ENCODE measurements at regions of chr1 and their contacts with region 1.

Region 1: DNA sequence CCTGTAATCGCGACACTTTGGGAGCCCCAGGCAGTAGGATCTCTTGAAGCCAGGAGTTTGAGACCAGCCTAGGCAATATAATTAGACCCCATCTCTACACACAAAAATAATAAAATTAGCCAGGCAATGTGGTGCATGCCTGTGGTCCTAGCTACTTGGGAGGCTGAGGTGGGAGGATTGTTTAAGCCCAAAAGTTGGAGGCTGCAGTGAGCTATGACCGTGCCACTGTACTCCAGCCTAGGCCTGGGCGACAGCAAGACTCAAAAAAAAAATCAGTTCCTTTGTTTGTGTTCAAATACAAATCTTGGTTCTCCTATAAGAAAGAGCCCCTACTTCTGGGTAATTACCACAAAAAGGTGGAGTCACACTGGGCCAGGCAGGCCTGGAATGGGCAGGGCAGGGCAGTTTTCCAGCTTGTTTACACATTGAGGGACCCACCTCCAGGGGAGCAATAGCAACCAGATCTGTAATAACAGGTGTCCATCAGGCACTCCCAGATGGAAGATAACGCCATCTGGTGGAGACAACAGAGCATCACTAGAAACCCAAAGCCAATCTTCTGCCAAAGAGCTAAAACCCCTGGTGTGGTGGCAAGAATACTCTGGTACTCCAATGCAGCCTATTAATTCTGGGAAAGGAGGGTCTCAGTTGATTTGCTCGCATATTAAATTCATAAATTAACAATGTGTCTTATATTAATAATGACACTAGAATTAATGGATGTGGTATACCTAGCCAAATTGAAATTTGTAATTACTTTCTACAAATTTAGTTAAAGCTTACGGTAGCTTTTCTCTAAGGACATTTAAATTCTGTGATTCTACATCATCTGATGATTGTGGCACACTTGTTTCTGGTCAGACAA is 13.2 kb downstream of the PPP1R15B start:
- DNase-seq: peak; percentile 55
- H3K4me3 Mint-ChIP-seq: no peak overlapping the region
- H3K27ac Mint-ChIP-seq: peak overlapping the region; percentile 31
- H3K4me1 Mint-ChIP-seq: peaks cover 7% of the 10 kb centered on the region
- H3K27me3 Mint-ChIP-seq: no peaks in the 10 kb centered on the region

Region 2: DNA sequence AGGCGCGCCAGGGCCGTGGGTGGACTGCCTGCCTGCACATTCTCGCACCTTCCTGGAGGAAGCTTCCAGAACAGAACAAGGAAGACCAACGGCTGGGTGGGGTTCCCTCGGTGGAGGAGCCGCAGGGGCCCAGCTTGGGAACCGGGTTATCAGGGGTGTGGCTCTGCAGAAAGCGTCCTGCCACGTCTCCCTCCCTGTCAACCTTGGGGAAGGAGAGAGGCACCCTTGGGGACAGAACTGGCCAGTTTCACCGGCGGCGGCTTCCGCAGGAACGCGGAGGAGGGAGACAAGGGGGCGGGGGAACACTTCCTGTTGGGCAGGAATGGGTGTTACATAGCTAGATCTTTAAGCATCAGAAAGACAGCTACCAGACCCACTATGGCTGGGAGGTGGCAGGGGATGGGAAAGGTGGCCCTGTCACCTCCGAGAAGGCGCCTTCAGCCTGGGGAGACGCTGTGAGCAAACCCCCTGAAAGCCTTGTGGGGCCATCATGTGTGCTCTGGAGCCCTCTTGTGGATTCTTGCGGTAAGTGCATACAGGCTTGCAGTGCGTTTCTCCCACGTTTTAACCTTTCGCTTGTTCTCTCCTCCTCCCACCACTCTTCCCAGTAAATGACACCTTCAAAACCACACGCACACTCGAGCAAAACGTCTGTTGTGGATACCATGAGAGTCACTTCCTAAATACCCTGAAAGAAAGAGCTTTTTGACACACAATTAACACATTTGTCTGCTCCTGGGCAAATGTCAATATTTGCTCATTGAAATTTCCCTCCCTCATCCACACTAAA is 34.9 kb before region 1 on chr1:
- CTCF ChIA-PET with region 1: interaction called, 16 read pairs
- POLR2A ChIA-PET with region 1: no interaction called
- DNase-seq: peak; percentile 76
- H3K4me3 Mint-ChIP-seq: peak overlapping the region; percentile 31
- H3K27ac Mint-ChIP-seq: no peak overlapping the region
- H3K4me1 Mint-ChIP-seq: peaks cover 11% of the 10 kb centered on the region
- H3K27me3 Mint-ChIP-seq: peaks cover 10% of the 10 kb centered on the region

Region 3: GRCh38 chr1:204384994-204385352 is 13.5 kb before region 1 on chr1:
- CTCF ChIA-PET with region 1: interaction called, 19 read pairs
- POLR2A ChIA-PET with region 1: interaction called, 4 read pairs
- DNase-seq: no peak
- H3K4me3 Mint-ChIP-seq: no peak overlapping the region
- H3K27ac Mint-ChIP-seq: no peak overlapping the region
- H3K4me1 Mint-ChIP-seq: peaks cover 3% of the 10 kb centered on the region
- H3K27me3 Mint-ChIP-seq: peaks cover 11% of the 10 kb centered on the region

Region 4: GRCh38 chr1:204431310-204432165 is 33.1 kb after region 1 on chr1:
- CTCF ChIA-PET with region 1: interaction called, 15 read pairs
- POLR2A ChIA-PET with region 1: no interaction called
- DNase-seq: peak; percentile 81
- H3K4me3 Mint-ChIP-seq: no peak overlapping the region
- H3K27ac Mint-ChIP-seq: no peak overlapping the region
- H3K4me1 Mint-ChIP-seq: no peaks in the 10 kb centered on the region
- H3K27me3 Mint-ChIP-seq: no peaks in the 10 kb centered on the region

Region 5: GRCh38 chr1:204516180-204516879 is 117.9 kb after region 1 on chr1 and contains the start of gene MDM4:
- CTCF ChIA-PET with region 1: interaction called, 15 read pairs
- POLR2A ChIA-PET with region 1: interaction called, 3 read pairs
- DNase-seq: peak; percentile 95
- H3K4me3 Mint-ChIP-seq: no peak within 1 kb of the TSS
- H3K27ac Mint-ChIP-seq: no peak within 1 kb of the TSS
- H3K4me1 Mint-ChIP-seq: peaks cover 64% of the 10 kb centered on the region
- H3K27me3 Mint-ChIP-seq: no peaks in the 10 kb centered on the region
- total RNA-seq, gene MDM4: 85.1 to 95.4 TPM

Measured in activated CD4-positive, alpha-beta memory T cell treated with anti-CD3 and anti-CD28 coated beads, Interleukin-2, amount 10 ng/mL, durations not matched to agents 7 days and 5 days (primary cell).